Activated CD4-positive, alpha-beta T cell treated with anti-CD3 and anti-CD28 coated beads, Interleukin-2, amount 10 ng/mL, durations not matched to agents 24 days and 14 days (primary cell): ENCODE measurements at regions of chr13 and their contacts with region 1.

Region 1: DNA sequence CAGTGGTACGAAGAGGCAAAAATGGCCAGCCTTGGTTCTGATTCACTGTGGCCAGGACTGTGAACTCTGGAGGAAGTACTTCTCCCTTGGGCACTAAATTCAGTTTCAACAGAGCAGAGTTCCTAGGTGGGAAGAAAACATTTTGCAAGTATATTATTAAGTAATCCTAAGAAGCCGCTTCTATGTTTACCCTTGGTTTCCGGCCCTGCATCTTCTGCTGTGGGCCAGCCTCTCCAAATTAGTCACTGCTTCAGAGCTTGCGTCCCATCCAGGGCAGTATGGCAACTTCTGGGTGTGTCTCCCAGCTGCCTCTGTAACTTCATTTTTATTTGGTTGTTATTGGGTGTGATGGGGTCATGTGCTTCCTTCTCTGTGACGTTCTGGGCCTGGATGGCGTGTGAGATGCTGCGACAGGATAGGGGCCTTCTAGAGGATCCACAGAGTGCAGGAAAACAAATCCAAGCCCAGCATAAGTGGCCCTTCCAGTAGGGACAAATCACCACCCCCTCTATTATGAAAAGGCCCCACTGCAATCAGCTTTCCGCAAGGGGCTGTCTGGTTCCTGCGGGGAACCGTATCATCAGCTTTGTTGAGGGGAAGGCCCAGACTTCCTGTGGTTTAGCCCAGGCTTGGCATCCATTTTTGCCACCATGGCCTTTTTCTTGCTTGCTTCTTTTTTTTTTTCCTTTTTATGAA is 55.1 kb upstream of the C1QTNF9 start:
- DNase-seq: peak; percentile 85
- H3K4me3 Mint-ChIP-seq: peak overlapping the region; percentile 81
- H3K27ac Mint-ChIP-seq: peak overlapping the region; percentile 97
- H3K4me1 Mint-ChIP-seq: peaks cover 66% of the 10 kb centered on the region
- H3K27me3 Mint-ChIP-seq: no peaks in the 10 kb centered on the region

Region 2: DNA sequence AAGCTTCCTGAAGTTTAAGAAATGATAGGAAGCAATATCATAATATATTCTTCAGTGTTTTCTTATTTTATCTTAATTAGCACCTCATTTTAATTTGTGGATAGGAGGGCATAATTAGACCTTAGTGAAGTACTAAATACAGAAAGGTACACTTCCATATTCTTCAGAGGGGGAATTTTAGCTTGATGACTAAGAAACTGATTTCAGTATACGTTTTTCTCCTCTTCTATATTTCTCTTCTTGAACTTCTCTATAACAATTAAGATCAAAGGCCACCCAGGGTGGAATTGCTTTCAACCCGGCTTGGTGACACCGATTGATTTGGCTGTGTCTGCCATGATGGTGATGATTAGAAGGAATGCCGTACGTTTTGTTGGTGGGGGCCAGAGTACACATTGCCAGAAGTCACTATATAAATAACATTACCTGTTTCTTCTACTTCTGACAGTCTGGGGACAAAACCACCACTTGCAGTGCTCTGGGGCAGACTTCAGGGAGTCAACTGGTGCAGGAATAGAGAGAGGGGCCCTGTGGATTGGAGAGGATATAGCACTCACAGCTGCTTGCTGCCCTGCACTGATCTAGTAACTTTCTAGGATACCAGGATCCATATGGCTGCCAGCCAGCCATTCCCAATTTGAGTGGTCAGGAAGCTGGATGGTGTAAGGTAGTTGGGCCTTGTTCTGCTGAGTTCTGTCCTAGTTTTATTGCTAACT is 19.9 kb before region 1 on chr13:
- intact Hi-C with region 1: loop called (anchors 1 kb)
- DNase-seq: no peak
- H3K4me3 Mint-ChIP-seq: no peak overlapping the region
- H3K27ac Mint-ChIP-seq: peak overlapping the region; percentile 68
- H3K4me1 Mint-ChIP-seq: peaks cover 41% of the 10 kb centered on the region
- H3K27me3 Mint-ChIP-seq: no peaks in the 10 kb centered on the region

Region 3: DNA sequence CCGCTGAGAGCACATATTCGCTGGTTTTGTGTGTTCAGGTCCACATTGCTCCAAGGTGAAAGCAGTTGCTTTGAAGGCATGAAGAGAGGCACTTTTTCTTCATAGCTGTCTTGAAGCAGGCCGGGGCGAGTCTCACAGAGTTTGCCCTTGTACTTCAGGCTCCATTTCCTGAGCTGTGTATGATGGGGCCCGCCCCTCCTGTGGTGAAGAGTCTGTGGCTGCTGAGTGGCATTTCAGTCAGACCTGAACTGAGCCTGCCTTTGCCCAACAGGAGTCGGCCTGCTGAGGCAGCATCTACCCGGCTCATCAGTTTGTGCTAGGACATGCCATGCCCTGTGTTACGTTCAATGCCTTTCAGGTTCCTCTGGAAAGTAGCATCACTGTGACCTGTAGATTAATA is 10.7 kb after region 1 on chr13:
- intact Hi-C with region 1: loop called (anchors 1 kb)
- DNase-seq: peak; percentile 94
- H3K4me3 Mint-ChIP-seq: peak overlapping the region; percentile 78
- H3K27ac Mint-ChIP-seq: peak overlapping the region; percentile 66
- H3K4me1 Mint-ChIP-seq: peaks cover 87% of the 10 kb centered on the region
- H3K27me3 Mint-ChIP-seq: no peaks in the 10 kb centered on the region

Region 4: GRCh38 chr13:24288870-24289269 is 34.6 kb after region 1 on chr13:
- intact Hi-C with region 1: no loop called
- DNase-seq: no peak
- H3K4me3 Mint-ChIP-seq: no peak overlapping the region
- H3K27ac Mint-ChIP-seq: no peak overlapping the region
- H3K4me1 Mint-ChIP-seq: no peaks in the 10 kb centered on the region
- H3K27me3 Mint-ChIP-seq: no peaks in the 10 kb centered on the region